Astrocyte of the cerebellum (primary cell): ENCODE measurements at regions of chr11 and their contacts with region 1.

Region 1: DNA sequence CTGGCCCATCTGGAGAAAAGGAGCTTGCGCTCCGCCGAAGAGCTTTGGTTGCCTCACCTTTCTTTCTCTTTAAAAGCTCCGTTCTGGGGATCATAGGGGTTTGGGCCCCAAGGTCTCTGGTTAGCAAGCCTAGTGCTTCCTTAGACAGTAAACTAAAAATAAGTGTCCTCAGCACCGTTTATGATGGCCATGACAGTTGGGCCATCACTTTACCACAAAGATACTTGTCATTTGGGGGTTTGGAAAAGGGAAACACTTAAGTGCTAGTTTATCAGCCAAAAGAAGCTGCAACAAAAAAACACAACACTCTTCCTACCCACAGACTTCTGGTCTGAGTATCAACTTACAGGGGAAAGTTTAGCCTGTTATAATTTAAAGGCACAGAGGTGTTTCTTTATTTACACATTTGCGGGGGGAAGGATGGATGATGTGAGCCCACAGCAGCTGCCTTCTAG is 88.4 kb upstream of the CD44 start:
- DNase-seq: no peak
- H3K4me3 ChIP-seq: no peak overlapping the region
- CTCF ChIP-seq: no peak

Region 2: GRCh38 chr11:35006389-35007128 is 44.0 kb before region 1 on chr11:
- in situ Hi-C with region 1: loop called (anchors 5 kb)
- DNase-seq: peak; percentile 45
- H3K4me3 ChIP-seq: no peak overlapping the region
- CTCF ChIP-seq: no peak